Breast epithelium (tissue), 4 donors: ENCODE measurements at regions of chr18 and their contacts with region 1.

Region 1: GRCh38 chr18:46167971-46168370 is 63.8 kb downstream of the HAUS1 start:
- DNase-seq: no peak
- H3K4me3 ChIP-seq: peak overlapping the region in 1 of 3 donors; percentile 25
- H3K27ac ChIP-seq: no peak overlapping the region
- H3K4me1 ChIP-seq: no peaks in the 10 kb centered on the region
- H3K27me3 ChIP-seq: no peaks in the 10 kb centered on the region
- CTCF ChIP-seq: no peak
- POLR2A ChIP-seq: no peak

Region 2: DNA sequence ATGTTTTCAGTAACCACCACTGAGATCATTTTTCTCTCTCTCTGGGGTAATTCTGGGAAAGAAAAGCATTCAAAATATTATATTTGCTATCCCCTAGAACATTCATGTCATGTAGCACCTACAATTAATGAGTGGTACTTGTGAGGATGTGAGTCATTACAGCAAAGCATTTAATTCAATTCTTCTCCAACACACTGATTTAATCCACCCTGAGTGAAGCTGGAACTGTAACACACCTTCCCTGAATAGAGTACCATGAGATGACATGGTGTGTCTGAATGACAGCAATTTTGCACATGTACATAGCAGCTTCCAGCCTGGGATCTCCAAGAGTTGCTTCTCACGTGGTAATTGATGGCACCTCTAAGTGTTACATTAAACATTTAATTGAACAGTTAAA is 759.8 kb before region 1 on chr18:
- intact Hi-C with region 1: loop called (anchors 5 kb)
- DNase-seq: no peak
- H3K4me3 ChIP-seq: no peak overlapping the region
- H3K27ac ChIP-seq: no peak overlapping the region
- H3K4me1 ChIP-seq: no peaks in the 10 kb centered on the region
- H3K27me3 ChIP-seq: no peaks in the 10 kb centered on the region
- CTCF ChIP-seq: no peak
- POLR2A ChIP-seq: no peak

Region 3: GRCh38 chr18:46920067-46920466 is 752.1 kb after region 1 on chr18:
- intact Hi-C with region 1: loop called (anchors 5 kb)
- DNase-seq: no peak
- H3K4me3 ChIP-seq: no peak overlapping the region
- H3K27ac ChIP-seq: no peak overlapping the region
- H3K4me1 ChIP-seq: no peaks in the 10 kb centered on the region
- H3K27me3 ChIP-seq: no peaks in the 10 kb centered on the region
- CTCF ChIP-seq: no peak
- POLR2A ChIP-seq: no peak